Gastrocnemius medialis (tissue), 4 donors: ENCODE measurements at regions of chr3 and their contacts with region 1.

Region 1: DNA sequence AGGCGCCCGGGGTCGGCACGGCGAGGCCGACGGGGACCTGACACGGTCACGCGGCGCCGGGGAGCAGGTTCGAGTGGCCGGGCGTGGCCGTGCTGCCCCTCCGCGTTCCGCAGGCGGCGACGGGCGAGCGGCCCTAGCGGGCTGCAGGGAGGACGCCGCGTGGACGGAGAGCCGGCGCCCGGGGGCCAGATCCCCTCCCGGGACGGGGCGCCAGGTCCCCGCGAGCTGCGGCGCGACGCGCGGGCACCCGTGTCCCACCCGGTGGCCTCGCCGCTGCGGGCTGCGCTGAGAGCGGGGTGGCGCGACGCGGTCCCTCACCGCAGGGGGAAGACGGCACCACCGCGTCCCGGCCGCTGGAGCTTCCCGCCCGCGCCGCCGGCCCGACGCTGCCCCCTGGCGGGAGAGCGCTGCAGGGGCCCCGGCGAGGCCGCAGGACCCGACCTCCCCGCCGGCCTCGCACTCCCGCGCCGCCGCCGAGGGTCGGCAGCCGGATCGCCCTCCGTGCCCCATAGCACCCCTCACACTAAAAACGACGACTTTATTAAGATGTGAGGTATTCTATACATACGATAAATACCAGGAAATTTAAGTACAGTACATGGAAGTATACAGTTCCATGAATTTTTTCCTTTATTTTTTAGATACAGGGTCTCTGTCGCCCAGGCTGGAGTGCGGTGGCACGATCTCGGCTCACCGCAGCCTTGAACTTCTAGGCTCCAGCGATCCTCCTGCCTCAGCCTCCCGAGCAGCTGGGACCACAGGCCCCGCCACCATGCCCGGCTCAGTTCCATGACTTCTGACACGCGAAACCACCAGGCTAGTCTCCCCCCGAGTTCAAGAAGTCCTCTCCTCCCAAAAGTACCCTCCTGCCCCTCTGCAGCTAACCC is 1.3 kb upstream of the PIGZ start:
- DNase-seq: peak in 1 of 2 donors; percentile 38
- ATAC-seq: peak; percentile 72 to 84
- H3K4me3 ChIP-seq: peak overlapping the region; percentile 78 to 97 (median 88)
- H3K27ac ChIP-seq: peak overlapping the region; percentile 31 to 77 (median 76)
- H3K4me1 ChIP-seq: peaks cover 0 to 9% of the 10 kb centered on the region in 2 donors
- H3K27me3 ChIP-seq: no peaks in the 10 kb centered on the region
- CTCF ChIP-seq: peak; percentile 67 to 98 (median 92)
- POLR2A ChIP-seq: no peak

Region 2: GRCh38 chr3:196323701-196324100 is 646.2 kb before region 1 on chr3:
- in situ Hi-C with region 1: no loop called
- intact Hi-C with region 1: no loop called
- DNase-seq: no peak
- ATAC-seq: no peak
- H3K4me3 ChIP-seq: no peak overlapping the region
- H3K27ac ChIP-seq: no peak overlapping the region
- H3K4me1 ChIP-seq: peaks cover 0 to 3% of the 10 kb centered on the region in 2 donors
- H3K27me3 ChIP-seq: no peaks in the 10 kb centered on the region
- CTCF ChIP-seq: no peak
- POLR2A ChIP-seq: no peak

Region 3: GRCh38 chr3:196711838-196712513 is 257.9 kb before region 1 on chr3 and contains the starts of genes CEP19 and PIGX:
- in situ Hi-C with region 1: no loop called
- intact Hi-C with region 1: no loop called
- DNase-seq: peak; percentile 66 to 68
- ATAC-seq: peak; percentile 94
- H3K4me3 ChIP-seq: peak within 1 kb of the TSS; percentile 72 to 100 (median 82)
- H3K27ac ChIP-seq: peak within 1 kb of the TSS; percentile 84 to 93 (median 90)
- H3K4me1 ChIP-seq: peaks cover 14 to 20% of the 10 kb centered on the region in 2 donors
- H3K27me3 ChIP-seq: no peaks in the 10 kb centered on the region
- CTCF ChIP-seq: peak; percentile 13 to 52 (median 41)
- POLR2A ChIP-seq: peak; percentile 81 to 88
- total RNA-seq, gene CEP19: 0.62 to 4.1 (median 1.4) TPM
- total RNA-seq, gene PIGX: 13.2 to 35.1 (median 28.8) TPM

Region 4: DNA sequence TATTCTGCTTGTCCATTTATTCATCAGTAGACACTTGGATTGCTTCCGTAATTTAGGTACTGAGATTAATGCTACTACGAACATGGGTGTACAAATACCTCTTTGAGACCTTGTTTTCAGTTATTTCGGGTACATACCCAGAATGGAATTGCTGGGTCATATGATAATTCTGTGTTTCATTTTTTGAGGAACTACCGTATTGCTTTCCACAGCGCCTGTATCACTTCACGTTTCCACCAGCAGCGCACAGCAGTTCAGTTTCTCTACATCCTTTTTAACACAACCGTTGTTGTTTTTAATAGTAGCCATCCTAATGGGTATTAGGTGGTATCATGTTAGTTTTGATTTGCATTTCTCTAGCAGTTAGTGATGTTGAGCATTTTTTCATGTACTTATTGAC is 220.8 kb before region 1 on chr3:
- in situ Hi-C with region 1: no loop called
- intact Hi-C with region 1: no loop called
- DNase-seq: no peak
- ATAC-seq: no peak
- H3K4me3 ChIP-seq: no peak overlapping the region
- H3K27ac ChIP-seq: no peak overlapping the region
- H3K4me1 ChIP-seq: peaks cover 0 to 9% of the 10 kb centered on the region in 2 donors
- H3K27me3 ChIP-seq: no peaks in the 10 kb centered on the region
- CTCF ChIP-seq: no peak
- POLR2A ChIP-seq: no peak

Region 5: GRCh38 chr3:196837819-196838420 is 132.0 kb before region 1 on chr3:
- in situ Hi-C with region 1: loop called in 3 of 4 experiments (anchors 5 to 10 kb)
- intact Hi-C with region 1: loop called (anchors 1 kb)
- DNase-seq: peak; percentile 30 to 59
- ATAC-seq: peak; percentile 83 to 91
- H3K4me3 ChIP-seq: no peak overlapping the region
- H3K27ac ChIP-seq: no peak overlapping the region
- H3K4me1 ChIP-seq: no peaks in the 10 kb centered on the region
- H3K27me3 ChIP-seq: no peaks in the 10 kb centered on the region
- CTCF ChIP-seq: peak; percentile 58 to 78 (median 67)
- POLR2A ChIP-seq: no peak

Region 6: DNA sequence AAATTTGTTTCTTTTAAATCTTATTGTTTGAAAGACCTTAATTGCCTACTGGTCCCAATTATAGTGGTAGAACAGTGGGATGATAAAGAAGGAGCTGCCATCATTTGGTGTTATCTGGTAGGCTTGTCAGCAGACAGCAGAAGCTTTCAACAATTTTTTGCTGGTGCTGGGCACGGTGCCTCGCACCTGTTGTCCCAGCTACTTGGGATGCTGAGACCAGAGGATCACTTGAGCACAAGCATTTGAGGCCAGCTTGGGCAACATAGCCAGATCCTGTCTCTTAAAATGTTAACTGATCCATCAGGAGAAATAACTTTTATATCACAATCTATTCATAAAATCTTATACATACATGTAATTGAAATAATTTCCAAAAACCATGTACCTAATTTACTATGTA is 66.2 kb before region 1 on chr3:
- in situ Hi-C with region 1: no loop called
- intact Hi-C with region 1: no loop called
- DNase-seq: peak; percentile 18 to 63
- ATAC-seq: peak; percentile 58 to 71
- H3K4me3 ChIP-seq: no peak overlapping the region
- H3K27ac ChIP-seq: peak overlapping the region in 2 of 4 donors; percentile 26 to 56
- H3K4me1 ChIP-seq: peaks cover 0 to 6% of the 10 kb centered on the region in 2 donors
- H3K27me3 ChIP-seq: no peaks in the 10 kb centered on the region
- CTCF ChIP-seq: no peak
- POLR2A ChIP-seq: no peak

Region 7: GRCh38 chr3:196942226-196942914 is 27.5 kb before region 1 on chr3 and contains the start of gene NCBP2:
- in situ Hi-C with region 1: no loop called
- intact Hi-C with region 1: loop called (anchors 1 kb)
- DNase-seq: peak; percentile 96 to 98
- ATAC-seq: peak; percentile 94 to 97
- H3K4me3 ChIP-seq: peak within 1 kb of the TSS; percentile 93 to 99 (median 98)
- H3K27ac ChIP-seq: peak within 1 kb of the TSS; percentile 88 to 93 (median 92)
- H3K4me1 ChIP-seq: peaks cover 27 to 36% of the 10 kb centered on the region in 2 donors
- H3K27me3 ChIP-seq: no peaks in the 10 kb centered on the region
- CTCF ChIP-seq: peak; percentile 56 to 77 (median 64)
- POLR2A ChIP-seq: peak; percentile 83 to 90
- total RNA-seq, gene NCBP2: 23.4 to 29.9 (median 27.5) TPM